Heart left ventricle (tissue), 16 donors: ENCODE measurements at regions of chr9 and their contacts with region 1.

Region 1: DNA sequence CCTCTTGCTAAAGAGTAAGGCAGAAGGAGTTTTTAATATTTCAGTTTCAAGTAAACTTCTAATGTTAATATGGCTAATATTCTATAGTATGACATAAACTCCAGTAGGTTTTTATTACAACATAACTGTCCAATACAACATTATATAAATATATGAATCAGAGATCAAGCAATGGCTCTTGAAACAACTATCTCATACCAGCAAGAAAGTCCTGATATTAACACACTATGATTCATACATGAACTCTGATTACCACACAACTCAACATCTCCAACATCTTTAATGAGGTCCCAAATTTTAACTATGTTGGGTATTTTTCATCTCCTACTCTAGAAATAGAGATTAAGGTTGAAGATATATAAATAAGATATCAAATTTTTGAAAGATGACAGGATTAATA is 878.3 kb downstream of the TLE1 start:
- DNase-seq: no peak
- ATAC-seq: no peak
- H3K4me3 ChIP-seq: no peak overlapping the region
- H3K27ac ChIP-seq: no peak overlapping the region
- H3K4me1 ChIP-seq: no peaks in the 10 kb centered on the region
- H3K27me3 ChIP-seq: no peaks in the 10 kb centered on the region
- CTCF ChIP-seq: no peak
- POLR2A ChIP-seq: no peak

Region 2: GRCh38 chr9:80867731-80868130 is 56.7 kb after region 1 on chr9:
- intact Hi-C with region 1: loop called in 1 of 10 experiments (anchors 5 kb)
- DNase-seq: no peak
- ATAC-seq: no peak
- H3K4me3 ChIP-seq: no peak overlapping the region
- H3K27ac ChIP-seq: no peak overlapping the region
- H3K4me1 ChIP-seq: no peaks in the 10 kb centered on the region
- H3K27me3 ChIP-seq: no peaks in the 10 kb centered on the region
- CTCF ChIP-seq: no peak
- POLR2A ChIP-seq: no peak

Region 3: GRCh38 chr9:81410197-81410596 is 599.2 kb after region 1 on chr9:
- intact Hi-C with region 1: no loop called
- DNase-seq: no peak
- ATAC-seq: no peak
- H3K4me3 ChIP-seq: no peak overlapping the region
- H3K27ac ChIP-seq: no peak overlapping the region
- H3K4me1 ChIP-seq: peaks cover 0 to 5% (median 0%) of the 10 kb centered on the region in 12 donors
- H3K27me3 ChIP-seq: no peaks in the 10 kb centered on the region
- CTCF ChIP-seq: no peak
- POLR2A ChIP-seq: no peak